Breast epithelium (tissue), 4 donors: ENCODE measurements at regions of chr5 and their contacts with region 1.

Region 1: GRCh38 chr5:176514244-176514950 is 22.8 kb downstream of the RNF44 start:
- DNase-seq: no peak
- H3K4me3 ChIP-seq: no peak overlapping the region
- H3K27ac ChIP-seq: no peak overlapping the region
- H3K4me1 ChIP-seq: no peaks in the 10 kb centered on the region
- H3K27me3 ChIP-seq: no peaks in the 10 kb centered on the region
- CTCF ChIP-seq: no peak
- POLR2A ChIP-seq: no peak

Region 2: DNA sequence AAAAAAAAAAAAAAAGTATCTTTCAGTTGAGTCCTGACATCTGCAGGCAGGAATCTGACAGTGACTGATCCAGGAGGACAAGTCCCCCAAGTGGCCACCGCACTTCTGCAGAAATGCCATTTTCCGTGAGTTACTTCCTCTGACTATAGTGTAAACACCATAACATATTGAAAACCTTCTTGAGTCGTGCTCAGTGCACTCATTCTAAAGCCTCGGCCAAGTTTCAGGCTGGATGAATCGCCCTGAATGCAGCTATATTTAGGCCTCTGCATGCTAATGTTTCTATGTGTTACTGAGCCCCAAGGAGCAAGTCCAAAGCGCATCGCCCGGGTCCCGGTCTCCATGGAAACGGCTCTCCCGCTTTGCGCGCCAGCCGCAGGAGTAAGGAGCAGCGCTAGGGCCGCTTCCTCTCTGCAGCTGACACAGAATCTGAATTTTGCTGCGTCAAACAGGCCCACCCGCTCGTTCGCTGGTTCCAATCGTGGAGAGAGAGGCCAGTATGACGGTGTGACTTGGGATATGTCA is 1454.6 kb before region 1 on chr5:
- intact Hi-C with region 1: no loop called
- DNase-seq: no peak
- H3K4me3 ChIP-seq: peak overlapping the region in 2 of 3 donors; percentile 13 to 40
- H3K27ac ChIP-seq: no peak overlapping the region
- H3K4me1 ChIP-seq: no peaks in the 10 kb centered on the region
- H3K27me3 ChIP-seq: peaks cover 0 to 6% of the 10 kb centered on the region in 2 donors
- CTCF ChIP-seq: no peak
- POLR2A ChIP-seq: no peak

Region 3: GRCh38 chr5:176481711-176482110 is 32.7 kb before region 1 on chr5:
- intact Hi-C with region 1: loop called (anchors 1 kb)
- DNase-seq: no peak
- H3K4me3 ChIP-seq: no peak overlapping the region
- H3K27ac ChIP-seq: no peak overlapping the region
- H3K4me1 ChIP-seq: no peaks in the 10 kb centered on the region
- H3K27me3 ChIP-seq: no peaks in the 10 kb centered on the region
- CTCF ChIP-seq: no peak
- POLR2A ChIP-seq: no peak

Region 4: GRCh38 chr5:176619203-176619568 is 104.8 kb after region 1 on chr5:
- intact Hi-C with region 1: no loop called
- DNase-seq: peak in 1 of 2 donors; percentile 23
- H3K4me3 ChIP-seq: peak overlapping the region in 2 of 3 donors; percentile 7 to 48
- H3K27ac ChIP-seq: no peak overlapping the region
- H3K4me1 ChIP-seq: peaks cover 0 to 11% of the 10 kb centered on the region in 2 donors
- H3K27me3 ChIP-seq: peaks cover 17 to 84% of the 10 kb centered on the region in 2 donors
- CTCF ChIP-seq: no peak
- POLR2A ChIP-seq: no peak